RWPE1 (cell line): ENCODE measurements at regions of chr9 and their contacts with region 1.

Region 1: DNA sequence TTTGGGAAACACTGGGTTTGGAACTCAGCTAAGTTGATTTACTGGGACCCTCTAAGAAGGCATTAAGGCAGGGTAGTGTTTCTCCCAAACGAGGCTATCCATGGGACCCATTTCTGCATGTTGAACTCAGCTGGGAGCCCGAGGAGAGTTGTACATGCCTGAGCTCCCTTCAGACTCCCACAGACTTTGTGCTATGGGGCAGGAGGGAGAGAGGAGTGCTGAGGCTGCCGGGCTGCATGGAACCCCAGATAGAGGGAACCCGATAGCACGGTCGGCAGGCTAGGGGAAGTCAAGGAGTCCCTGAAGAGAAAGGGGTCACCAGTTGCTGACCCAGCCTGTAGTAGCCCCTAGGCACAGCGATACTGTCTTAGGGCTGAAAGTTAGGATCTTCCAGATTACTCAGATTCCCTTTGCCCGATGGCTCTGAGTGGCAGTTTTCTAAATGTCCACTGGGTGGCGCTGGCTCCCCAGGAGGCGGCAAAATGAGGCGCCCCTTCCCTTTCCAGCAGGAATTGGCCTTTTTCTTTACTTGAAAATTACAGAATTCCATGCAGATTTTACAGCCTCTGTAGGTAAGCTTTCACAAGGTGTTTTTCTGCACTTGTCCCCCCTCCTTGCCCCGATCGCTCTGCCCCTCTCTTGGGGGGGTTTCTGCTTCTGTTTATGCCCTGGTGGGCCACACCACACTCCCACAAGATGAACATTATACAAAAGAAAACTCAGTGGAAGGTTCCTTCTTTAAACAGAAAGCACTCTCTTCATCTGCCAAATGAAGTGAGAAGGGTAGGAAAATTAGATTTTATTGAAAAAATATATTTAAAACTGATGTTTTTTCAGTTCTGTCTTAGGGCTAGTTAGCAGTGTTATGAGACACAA is 17.8 kb downstream of the NANS start:
- DNase-seq: peak; percentile 85
- H3K27ac ChIP-seq: peak overlapping the region; percentile 64
- CTCF ChIP-seq: peak; percentile 100

Region 2: DNA sequence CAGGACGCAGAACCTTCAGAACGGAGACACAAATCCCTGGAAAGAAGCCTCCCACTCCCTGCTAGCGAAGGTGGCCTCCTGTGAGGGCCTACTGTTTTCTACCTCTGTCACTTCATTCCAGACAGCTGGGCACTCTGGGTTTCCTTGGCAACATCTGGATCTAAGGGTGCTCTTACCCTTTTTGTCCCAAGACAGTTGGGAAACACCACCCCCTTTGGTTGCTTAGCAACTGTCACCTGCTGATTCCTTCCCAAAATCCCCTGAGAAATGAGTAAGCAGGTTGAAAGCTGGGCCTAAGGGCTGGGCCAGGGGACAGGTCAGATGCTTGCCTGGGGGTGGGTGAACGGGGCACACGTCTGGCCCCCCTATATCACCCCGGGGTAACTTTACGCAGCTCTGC is 11.6 kb after region 1 on chr9:
- CTCF ChIA-PET with region 1: interaction called, 16 read pairs
- POLR2A ChIA-PET with region 1: no interaction called
- DNase-seq: no peak
- H3K27ac ChIP-seq: peak overlapping the region; percentile 31
- CTCF ChIP-seq: no peak

Region 3: DNA sequence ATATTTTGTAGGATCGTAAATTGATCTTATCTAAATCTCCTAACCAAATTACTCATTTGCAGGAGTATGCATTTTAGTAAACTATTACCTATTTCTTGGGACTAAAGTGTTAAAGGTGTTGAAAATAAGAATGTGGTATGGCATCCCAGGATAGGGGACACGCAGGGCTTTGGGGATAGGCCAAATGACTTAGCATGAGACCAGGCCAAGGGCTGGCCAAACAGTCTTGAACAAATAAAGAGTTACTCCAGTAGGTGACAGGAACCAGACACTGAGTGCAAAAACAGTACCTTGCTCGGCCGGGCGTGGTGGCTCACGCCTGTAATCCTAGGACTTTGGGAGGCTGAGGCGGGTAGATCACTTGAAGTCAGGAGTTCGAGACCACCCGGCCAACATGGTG is 156.0 kb after region 1 on chr9:
- CTCF ChIA-PET with region 1: interaction called, 11 read pairs
- POLR2A ChIA-PET with region 1: no interaction called
- DNase-seq: no peak
- H3K27ac ChIP-seq: peak overlapping the region; percentile 57
- CTCF ChIP-seq: no peak